Posterior cingulate gyrus (tissue), 11 donors: ENCODE measurements at regions of chr18 and their contacts with region 1.

Region 1: GRCh38 chr18:11310476-11311086 is 161.2 kb upstream of the PIEZO2 start:
- DNase-seq: peak in 3 of 10 donors; percentile 14 to 57 (median 46)

Region 2: DNA sequence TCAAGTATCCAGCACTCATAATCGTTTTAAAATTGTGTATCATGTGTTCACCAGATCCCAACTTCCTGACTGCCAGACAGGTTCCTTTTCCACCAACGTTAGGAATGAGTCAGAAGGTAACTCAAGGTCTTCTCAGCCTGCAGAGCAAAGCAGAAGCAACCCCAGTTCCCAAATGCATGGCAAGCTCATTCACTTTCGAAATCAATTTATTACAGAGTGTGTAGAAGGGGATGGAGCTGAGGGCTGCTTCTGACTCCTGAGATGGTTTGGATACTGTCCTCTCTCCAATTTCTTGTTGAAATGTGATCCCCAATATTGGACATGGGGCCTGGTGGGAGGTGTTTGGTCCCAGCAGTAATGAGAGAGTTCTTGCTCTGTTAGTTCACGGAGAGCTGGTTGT is 275.7 kb before region 1 on chr18:
- intact Hi-C with region 1: no loop called
- DNase-seq: no peak

Region 3: GRCh38 chr18:11398625-11399024 is 88.0 kb after region 1 on chr18:
- intact Hi-C with region 1: loop called (anchors 10 kb)
- DNase-seq: no peak

Region 4: GRCh38 chr18:11553098-11553940 is 242.7 kb after region 1 on chr18:
- intact Hi-C with region 1: loop called (anchors 2 kb)
- DNase-seq: peak in 3 of 10 donors; percentile 14 to 25 (median 24)

Region 5: DNA sequence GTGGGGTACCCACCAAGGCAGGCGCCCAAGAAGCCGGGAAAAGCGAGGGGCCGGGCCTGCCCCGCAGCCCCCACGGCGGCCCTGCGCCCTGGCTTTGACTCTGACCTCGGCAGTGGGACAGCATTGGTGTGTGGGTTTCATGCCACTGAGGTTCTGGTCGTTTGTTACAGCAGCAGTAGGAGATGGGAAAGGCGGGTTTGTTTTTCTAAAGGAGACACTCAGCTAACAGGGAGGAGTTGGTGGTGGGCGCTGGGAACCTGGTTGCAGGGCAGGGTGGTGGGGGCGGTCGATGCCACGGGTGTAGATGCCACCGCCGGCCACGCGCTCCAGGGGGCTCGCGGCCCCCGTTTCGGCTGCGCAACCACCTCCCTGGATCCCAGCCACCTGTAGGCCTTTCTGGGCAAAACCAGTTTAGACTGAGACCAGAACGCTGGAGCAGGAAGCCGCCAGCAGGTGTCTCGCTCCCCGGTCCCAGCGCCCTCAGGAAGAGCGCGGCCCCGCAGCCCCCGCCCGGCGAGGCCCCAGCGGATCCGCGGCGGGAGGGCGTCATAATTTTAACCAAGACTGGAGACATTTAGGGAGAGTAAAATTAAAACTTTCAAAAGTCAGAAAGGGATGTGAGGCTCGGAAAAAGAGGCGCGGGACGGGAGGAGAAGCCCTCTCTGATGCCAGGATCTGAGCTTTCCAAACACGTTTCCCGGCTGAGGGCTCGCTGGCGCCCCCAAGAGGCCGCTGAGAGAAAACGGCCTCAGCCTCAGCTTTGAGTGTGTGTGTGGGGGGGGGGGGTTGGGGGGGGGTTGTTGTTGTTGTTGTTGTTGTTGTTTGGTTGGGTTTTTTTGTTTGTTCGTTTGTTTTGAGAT is 961.0 kb after region 1 on chr18:
- intact Hi-C with region 1: no loop called
- DNase-seq: peak; percentile 35 to 95 (median 67)